ENCODE measurements at regions of chr12 and their contacts with region 1.

Region 1: GRCh38 chr12:5442251-5443006 is 10.5 kb downstream of the NTF3 start:
- DNase-seq: no peak
- H3K4me3 ChIP-seq: no peak overlapping the region
- CTCF ChIP-seq: peak; percentile 58

Region 2: DNA sequence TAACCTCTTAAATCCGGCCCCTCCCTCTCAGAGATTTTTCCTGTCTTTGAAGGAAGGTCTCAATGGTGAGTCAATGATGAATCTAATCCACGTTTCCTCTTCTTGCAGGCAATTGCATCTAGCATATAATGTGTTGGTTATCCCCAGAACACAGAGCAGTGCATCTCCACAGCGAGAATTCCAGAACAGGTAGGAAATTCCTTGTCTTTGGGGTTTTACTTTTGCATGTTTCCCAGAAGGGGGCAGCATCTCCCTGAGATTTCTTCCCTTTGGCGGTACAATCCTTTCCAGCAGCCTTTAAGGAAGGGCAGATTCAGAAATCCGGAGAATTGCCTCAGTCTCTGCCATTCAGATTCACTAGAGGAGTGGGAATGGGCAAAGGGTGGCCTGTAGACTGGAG is 270.7 kb before region 1 on chr12:
- CTCF ChIA-PET with region 1: interaction called, 38 read pairs
- POLR2A ChIA-PET with region 1: no interaction called
- DNase-seq: no peak
- H3K4me3 ChIP-seq: no peak overlapping the region
- CTCF ChIP-seq: peak; percentile 61

Region 3: GRCh38 chr12:5328669-5329517 is 113.5 kb before region 1 on chr12:
- CTCF ChIA-PET with region 1: no interaction called
- POLR2A ChIA-PET with region 1: no interaction called
- DNase-seq: no peak
- H3K4me3 ChIP-seq: no peak overlapping the region
- CTCF ChIP-seq: no peak

Region 4: DNA sequence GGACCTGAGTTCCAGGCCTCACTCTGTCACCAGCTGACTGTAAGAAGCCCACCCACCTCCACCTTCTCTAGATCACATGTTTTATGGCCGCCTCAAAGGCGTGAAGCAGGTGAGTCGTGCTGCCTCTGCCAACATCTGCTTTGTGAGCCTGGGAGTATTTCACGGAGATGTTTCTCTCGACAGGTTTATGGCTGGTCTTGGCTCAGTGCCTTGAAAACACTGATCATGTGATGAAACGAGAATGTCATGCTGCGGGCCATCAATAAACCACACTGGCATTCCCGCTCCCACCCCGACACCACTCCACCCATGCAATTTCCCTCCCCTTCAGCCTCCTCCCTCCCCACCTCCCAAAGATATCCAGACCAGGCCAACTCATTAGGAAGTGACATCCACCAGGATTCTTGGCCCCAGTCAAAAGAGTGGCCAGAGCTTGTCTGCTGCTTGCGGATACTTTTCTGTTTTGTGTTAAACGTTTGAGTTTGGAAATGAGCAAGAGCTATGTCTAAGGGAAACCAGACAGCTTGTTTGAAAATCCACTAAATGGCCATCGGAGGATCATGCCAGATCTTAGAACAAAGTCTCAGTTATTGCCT is 64.3 kb before region 1 on chr12:
- CTCF ChIA-PET with region 1: no interaction called
- POLR2A ChIA-PET with region 1: no interaction called
- DNase-seq: no peak
- H3K4me3 ChIP-seq: no peak overlapping the region
- CTCF ChIP-seq: no peak

Region 5: DNA sequence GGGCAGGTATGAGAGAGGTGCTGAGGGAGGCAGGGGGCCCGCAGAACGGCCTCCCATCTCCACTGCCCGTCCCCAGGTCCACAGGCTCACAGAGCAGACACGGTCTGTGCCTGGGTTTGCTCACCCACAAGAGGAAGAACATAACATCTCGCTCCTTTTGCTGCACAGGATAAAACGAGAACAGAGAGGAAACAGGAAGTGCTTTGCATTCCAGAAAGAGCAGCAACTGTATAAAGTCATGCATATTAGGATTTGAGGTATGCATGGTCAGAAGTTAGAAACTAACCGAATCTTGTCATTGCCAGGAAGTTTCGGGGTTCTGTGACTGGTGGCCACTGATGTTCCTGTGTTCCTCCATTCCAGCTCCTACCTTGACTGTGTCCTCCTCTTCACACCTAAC is 14.5 kb after region 1 on chr12:
- CTCF ChIA-PET with region 1: interaction called, 48 read pairs
- POLR2A ChIA-PET with region 1: interaction called, 3 read pairs
- DNase-seq: peak; percentile 67
- H3K4me3 ChIP-seq: no peak overlapping the region; the same call in 1 of the 2 replicates
- CTCF ChIP-seq: no peak

Region 6: DNA sequence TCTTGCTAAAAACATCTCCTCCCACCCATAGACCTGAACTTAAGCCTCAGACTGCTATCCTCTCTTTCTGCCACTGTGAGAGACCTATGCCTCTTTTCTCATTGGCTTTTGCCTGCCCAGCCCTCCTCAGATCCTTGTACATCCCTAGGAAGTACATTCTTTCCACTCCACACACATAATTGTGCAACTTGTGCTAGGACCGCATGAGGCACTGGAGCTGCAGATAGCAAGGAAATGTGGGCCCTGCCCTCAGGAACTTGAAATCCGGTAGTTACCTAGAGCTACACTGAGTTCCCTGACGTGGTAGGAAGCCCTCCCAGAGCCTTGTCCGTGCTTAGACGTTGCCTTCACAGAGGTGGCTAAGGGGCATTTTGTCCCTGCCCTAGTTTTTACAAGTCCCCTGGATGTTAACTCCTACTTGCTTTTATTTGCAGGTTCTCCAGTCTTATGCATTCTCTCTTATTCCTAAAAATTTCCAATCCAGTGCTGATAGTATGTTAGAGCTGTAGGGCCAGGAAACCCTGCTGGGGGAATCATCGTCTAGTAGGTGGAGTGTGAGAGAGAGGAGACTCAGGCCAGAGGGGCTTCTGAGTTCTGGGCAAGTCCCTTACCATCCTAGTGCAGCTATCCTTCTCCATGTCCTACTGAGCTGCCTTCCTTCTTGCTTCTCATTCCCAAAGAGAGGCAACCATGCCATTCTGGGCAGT is 30.8 kb after region 1 on chr12:
- CTCF ChIA-PET with region 1: no interaction called
- POLR2A ChIA-PET with region 1: no interaction called
- DNase-seq: no peak
- H3K4me3 ChIP-seq: no peak overlapping the region
- CTCF ChIP-seq: no peak